GM13976 (cell line): ENCODE measurements at regions of chr1 and their contacts with region 1.

Region 1: GRCh38 chr1:203486618-203487370 is 7.2 kb upstream of the OPTC start:
- DNase-seq: no peak
- CTCF ChIP-seq: no peak

Region 2: GRCh38 chr1:203340112-203340804 is 146.5 kb before region 1 on chr1:
- in situ Hi-C with region 1: loop called (anchors 5 kb)
- DNase-seq: peak; percentile 83
- CTCF ChIP-seq: peak; percentile 86